Lower leg skin (tissue), 4 donors: ENCODE measurements at regions of chr6 and their contacts with region 1.

Region 1: DNA sequence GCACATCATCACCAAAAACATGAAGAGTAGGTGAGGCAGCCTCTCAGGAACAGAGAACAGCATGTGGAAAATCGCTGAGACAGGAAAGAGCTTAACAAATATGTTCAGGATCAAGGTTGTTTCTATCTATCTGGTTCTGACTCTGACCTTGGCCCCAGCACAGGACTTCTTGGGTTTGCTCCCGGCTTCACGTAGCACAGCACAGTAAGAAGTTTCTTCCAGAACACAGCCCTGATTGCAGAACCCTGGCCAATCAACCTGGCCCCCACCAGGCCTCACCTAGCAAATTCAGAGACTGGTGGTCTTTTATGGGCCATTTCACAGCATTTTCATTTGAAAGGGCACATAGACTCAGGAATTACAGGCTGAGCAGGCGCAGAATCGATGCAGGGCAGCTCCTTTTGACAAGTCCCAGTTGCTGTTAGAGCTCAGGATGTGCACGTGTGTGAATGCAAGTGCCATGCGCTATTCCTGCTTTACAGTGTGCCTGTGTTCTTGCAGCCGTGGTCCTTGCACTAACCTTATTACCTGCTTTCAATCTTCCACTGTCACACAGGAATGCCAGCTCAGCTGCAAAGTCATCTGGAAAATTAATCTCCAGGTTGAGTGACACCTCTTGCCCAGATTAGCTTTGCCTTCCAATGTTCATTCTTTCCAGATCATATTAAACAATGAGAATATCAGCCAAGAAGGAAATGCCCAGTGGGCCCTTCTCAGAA is 100.5 kb upstream of the SLC2A12 start:
- DNase-seq: no peak
- H3K4me3 ChIP-seq: no peak overlapping the region
- CTCF ChIP-seq: no peak
- POLR2A ChIP-seq: no peak

Region 2: DNA sequence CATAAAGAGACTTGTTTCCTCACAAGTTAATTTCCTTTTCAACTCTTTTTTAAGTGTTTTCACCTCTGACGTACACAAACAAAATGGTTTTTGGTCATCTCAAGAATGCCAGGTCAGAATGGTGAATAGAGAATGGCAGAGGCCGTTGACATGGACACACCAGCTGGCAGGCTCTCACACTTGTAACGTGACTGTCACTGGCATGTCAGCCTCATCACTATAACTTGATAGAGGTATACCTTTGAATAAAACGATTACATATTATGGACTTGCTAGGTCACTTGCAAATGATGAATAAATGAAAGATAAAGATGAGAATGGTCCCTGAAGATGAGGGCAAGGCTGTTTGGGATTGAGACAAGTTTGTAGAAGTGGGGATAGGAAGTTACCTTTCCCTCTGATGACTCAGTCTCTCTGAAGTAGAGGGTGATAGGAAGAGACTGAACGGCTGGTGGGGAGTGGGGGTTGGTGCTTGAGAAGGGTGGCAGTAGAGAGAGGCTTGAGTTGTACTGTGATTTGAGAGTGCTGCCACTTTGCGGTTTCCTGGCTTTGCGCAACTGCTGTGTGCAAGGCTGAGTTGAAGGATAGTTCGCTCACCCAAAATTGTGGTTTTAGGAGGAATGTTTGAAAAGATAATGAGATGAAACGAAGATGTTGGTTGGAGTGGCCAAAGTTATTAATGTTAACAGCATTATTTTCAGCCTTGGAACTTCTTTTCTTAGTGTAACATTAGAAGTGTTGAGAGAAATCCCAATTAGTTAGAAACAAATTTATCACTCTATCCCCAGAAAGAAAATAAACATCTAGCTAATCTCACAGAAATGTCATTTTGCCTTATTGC is 169.6 kb before region 1 on chr6:
- intact Hi-C with region 1: no loop called
- DNase-seq: no peak
- H3K4me3 ChIP-seq: no peak overlapping the region
- CTCF ChIP-seq: no peak
- POLR2A ChIP-seq: no peak

Region 3: DNA sequence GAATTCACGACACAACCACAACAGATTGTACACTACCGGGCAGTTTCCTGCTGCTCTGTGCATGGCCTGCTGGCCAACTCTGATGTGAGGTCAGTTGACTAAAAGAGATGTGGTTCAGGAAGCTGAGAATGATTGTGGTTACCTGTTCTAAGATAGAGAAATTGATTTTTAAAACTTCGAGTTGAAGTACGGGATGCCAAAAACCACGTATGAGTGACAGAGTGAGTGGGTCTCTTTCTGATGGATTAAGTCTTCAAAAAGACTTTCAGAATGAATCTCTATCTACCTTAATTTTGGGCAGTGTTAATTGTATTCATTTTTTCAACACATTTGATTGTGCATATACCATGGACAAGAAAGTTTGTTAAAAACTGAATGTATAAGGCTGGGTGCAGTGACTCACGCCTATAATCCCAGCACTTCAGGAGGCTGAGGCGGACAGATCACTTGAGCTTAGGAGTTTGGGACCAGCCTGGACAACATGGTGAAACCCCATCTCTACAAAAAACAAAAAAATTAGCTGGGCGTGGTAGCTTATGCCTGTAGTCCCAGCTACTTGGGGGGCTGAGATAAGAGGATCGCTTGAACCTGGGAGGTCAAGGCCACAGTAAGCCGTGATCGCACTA is 43.8 kb after region 1 on chr6:
- intact Hi-C with region 1: no loop called
- DNase-seq: no peak
- H3K4me3 ChIP-seq: no peak overlapping the region
- CTCF ChIP-seq: no peak
- POLR2A ChIP-seq: no peak

Region 4: GRCh38 chr6:134315974-134316441 is 163.1 kb after region 1 on chr6:
- intact Hi-C with region 1: no loop called
- DNase-seq: no peak
- H3K4me3 ChIP-seq: no peak overlapping the region
- CTCF ChIP-seq: no peak
- POLR2A ChIP-seq: no peak

Region 5: DNA sequence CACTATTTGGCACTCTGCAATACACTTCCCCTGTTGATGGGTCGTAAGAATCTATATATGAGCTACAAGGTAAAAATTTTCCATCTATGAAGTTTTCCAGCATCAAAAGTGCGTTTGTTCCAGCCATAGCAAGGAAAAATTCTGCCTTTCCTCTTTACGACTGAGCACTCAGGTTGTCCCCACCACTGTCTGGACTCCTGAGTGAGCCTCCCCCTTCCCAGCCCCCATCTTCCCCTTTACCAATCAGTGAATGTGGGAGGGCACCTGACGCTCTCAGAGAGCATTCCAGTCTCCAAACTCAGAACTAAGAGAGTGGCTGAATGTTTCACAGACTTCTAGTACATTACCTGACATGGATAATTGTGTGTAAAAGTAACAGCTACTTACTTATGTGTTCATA is 797.0 kb after region 1 on chr6 and contains the start of gene ALDH8A1:
- intact Hi-C with region 1: loop called (anchors 10 kb)
- DNase-seq: no peak
- H3K4me3 ChIP-seq: no peak within 1 kb of the TSS
- CTCF ChIP-seq: no peak
- POLR2A ChIP-seq: no peak
- total RNA-seq, gene ALDH8A1: 0.81 to 1.9 (median 0.88) TPM in 3 of 4 donors, not detected in the other